Activated naive CD4-positive, alpha-beta T cell treated with anti-CD3 and anti-CD28 coated beads for 36 hours (primary cell): ENCODE measurements at regions of chr1 and their contacts with region 1.

Region 1: DNA sequence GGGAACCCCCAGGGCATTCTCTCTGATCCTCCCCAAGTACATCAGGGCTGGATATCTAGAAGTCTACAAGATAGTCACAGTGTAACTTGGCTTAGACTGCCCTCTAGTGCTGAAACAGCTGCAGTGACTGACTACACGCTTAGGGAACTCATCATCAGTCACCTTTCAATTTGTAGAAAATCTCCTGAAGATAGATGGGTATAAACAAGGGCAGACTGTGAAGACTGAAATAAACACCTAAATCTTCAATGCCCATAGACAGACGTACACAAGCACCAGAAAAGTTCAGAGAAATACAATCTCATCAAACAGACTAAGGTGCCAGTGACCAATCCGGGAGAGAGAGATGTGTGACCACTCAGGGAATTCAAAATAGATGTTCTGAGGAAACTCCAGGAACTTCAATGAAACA is 46.6 kb downstream of the PACC1 start:
- DNase-seq: peak; percentile 77
- H3K4me3 Mint-ChIP-seq: no peak overlapping the region
- H3K27ac Mint-ChIP-seq: no peak overlapping the region
- H3K4me1 Mint-ChIP-seq: no peaks in the 10 kb centered on the region
- H3K27me3 Mint-ChIP-seq: no peaks in the 10 kb centered on the region

Region 2: DNA sequence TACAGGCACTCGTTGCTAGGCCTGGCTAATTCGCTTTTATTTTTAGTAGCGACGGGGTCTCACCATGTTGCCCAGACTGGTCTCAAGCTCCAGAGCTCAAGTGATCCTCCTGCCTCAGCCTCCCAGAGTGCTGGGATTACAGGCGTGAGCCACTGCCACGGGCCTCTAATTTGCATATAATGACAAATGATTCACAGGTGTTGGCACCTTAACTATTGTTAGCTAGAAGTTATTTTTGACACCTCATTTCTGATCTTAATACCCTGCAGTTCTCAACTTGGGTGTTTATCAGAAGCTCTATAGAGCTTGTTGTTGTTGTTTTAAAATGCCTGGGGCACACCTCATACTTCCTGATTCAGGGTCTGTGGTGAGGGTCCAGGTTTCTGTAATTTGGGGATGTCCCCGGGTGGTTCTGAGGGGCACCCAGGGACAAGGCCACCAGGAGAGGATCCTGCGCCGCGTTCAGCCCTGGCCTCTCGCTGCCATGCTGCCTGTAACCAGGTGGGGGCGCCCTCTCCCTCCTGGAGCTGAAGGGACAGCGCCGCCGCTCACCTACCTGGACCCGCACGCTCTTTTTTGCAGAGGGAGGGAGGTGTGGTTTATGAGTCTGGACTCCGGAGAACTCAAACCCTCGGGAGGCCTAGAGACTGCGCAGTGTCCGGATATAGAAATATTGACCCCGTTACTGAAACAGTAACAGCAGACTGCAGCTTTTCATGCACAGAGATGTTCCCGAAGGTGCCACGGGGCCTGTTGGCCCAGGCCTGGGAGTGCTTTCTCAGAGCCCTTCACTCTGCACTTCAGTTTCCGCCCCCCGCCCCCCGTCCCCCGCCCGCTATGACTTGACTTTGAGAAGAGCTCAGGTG is 669.7 kb before region 1 on chr1:
- CTCF ChIA-PET with region 1: interaction called, 10 read pairs
- intact Hi-C with region 1: loop called (anchors 1 kb)
- DNase-seq: peak; percentile 92
- H3K4me3 Mint-ChIP-seq: peak overlapping the region; percentile 49
- H3K27ac Mint-ChIP-seq: no peak overlapping the region
- H3K4me1 Mint-ChIP-seq: peaks cover 14% of the 10 kb centered on the region
- H3K27me3 Mint-ChIP-seq: no peaks in the 10 kb centered on the region

Region 3: DNA sequence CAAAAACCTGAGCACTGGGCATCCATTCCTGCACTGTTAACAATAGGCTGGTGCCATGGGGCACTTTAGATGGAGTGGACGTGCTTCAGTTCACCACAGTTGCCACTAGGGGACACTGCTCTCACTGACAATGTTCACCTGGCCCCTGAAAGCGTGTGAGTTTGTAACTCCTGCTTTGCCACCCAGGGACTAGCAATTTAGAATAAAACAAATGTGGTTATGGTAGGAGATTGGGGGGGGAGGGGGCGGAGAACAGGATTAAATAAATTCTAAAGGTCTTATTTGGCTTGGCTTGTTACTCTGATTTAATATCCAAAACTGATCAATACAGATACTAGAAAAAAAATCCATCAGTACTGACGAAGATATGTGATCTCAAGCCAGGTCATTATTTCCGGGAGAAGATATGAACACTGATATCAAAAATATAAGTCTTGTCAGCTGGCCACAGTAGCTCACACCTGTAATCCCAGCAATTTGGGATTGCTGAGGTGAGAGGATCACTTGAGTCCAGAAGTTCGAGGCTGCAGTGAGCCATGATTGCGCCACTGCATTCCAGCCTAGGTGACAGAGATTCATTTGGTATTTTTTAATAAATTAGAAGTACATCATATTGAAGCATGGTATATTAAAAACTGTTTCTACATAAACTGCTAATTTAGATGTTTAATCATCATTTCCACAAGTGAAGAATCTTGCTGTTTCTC is 355.9 kb before region 1 on chr1:
- CTCF ChIA-PET with region 1: interaction called, 10 read pairs
- intact Hi-C with region 1: loop called (anchors 1 kb)
- DNase-seq: peak; percentile 84
- H3K4me3 Mint-ChIP-seq: no peak overlapping the region
- H3K27ac Mint-ChIP-seq: no peak overlapping the region
- H3K4me1 Mint-ChIP-seq: no peaks in the 10 kb centered on the region
- H3K27me3 Mint-ChIP-seq: no peaks in the 10 kb centered on the region

Region 4: GRCh38 chr1:212070720-212071302 is 297.3 kb before region 1 on chr1:
- CTCF ChIA-PET with region 1: interaction called, 38 read pairs
- intact Hi-C with region 1: loop called (anchors 2 kb)
- DNase-seq: no peak
- H3K4me3 Mint-ChIP-seq: no peak overlapping the region
- H3K27ac Mint-ChIP-seq: no peak overlapping the region
- H3K4me1 Mint-ChIP-seq: no peaks in the 10 kb centered on the region
- H3K27me3 Mint-ChIP-seq: no peaks in the 10 kb centered on the region

Region 5: GRCh38 chr1:212229654-212230053 is 138.4 kb before region 1 on chr1:
- CTCF ChIA-PET with region 1: interaction called, 4 read pairs
- intact Hi-C with region 1: loop called (anchors 5 kb)
- DNase-seq: no peak
- H3K4me3 Mint-ChIP-seq: no peak overlapping the region
- H3K27ac Mint-ChIP-seq: no peak overlapping the region
- H3K4me1 Mint-ChIP-seq: peaks cover 23% of the 10 kb centered on the region
- H3K27me3 Mint-ChIP-seq: no peaks in the 10 kb centered on the region

Region 6: GRCh38 chr1:212595787-212596714 is 228.0 kb after region 1 on chr1:
- CTCF ChIA-PET with region 1: no interaction called
- intact Hi-C with region 1: no loop called
- DNase-seq: peak; percentile 69
- H3K4me3 Mint-ChIP-seq: peak overlapping the region; percentile 44
- H3K27ac Mint-ChIP-seq: peak overlapping the region; percentile 94
- H3K4me1 Mint-ChIP-seq: peaks cover 34% of the 10 kb centered on the region
- H3K27me3 Mint-ChIP-seq: peaks cover 21% of the 10 kb centered on the region